ENCODE measurements at regions of chr5 and their contacts with region 1.

Region 1: DNA sequence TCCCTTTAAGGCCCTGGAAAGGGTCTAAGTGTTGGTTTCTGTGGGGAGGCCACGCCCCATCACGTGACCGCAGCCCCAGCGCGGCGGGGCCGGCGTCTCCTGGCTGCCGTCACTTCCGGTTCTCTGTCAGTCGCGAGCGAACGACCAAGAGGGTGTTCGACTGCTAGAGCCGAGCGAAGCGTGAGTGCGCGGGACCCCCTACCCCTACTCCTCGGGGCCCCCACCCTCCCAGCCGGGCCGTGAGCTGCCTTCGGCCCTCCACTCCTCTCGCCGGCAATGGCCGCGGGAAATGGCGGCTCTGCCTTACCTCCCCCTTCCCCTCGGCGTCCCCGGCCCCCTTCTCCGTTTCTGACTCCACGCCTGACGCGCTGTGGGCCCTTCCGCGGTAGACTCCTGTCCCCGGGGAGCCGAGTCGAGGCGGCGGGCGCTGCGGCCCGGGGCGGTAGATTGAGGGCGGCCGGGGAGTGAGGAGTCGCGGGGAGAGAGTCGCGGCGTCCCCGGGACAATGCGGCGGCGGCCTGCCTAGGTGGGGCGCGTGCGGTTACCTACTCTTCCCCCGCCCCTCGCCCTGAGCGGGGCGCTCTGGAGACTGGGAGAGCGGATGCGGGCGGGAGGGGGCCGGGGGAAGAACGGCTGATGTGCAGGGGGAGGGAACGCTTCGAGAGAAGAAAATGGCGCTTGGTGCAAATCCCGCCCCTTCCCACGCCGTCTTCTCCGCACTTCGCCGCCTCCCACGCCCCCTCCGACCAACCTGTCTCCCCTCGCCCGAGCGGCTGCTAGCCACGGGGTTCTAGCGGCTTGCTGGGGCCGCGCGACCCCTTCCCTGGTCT is at the start of gene SUB1:
- DNase-seq: peak; percentile 94 to 96 (median 96)
- H3K4me3 ChIP-seq: peak within 1 kb of the TSS; percentile 74 to 97 (median 89)
- H3K27ac ChIP-seq: peak within 1 kb of the TSS; percentile 98 to 99
- H3K4me1 ChIP-seq: peaks cover 13 to 38% (median 20%) of the 10 kb centered on the region in 4 experiments
- H3K27me3 ChIP-seq: no peaks in the 10 kb centered on the region

Region 2: DNA sequence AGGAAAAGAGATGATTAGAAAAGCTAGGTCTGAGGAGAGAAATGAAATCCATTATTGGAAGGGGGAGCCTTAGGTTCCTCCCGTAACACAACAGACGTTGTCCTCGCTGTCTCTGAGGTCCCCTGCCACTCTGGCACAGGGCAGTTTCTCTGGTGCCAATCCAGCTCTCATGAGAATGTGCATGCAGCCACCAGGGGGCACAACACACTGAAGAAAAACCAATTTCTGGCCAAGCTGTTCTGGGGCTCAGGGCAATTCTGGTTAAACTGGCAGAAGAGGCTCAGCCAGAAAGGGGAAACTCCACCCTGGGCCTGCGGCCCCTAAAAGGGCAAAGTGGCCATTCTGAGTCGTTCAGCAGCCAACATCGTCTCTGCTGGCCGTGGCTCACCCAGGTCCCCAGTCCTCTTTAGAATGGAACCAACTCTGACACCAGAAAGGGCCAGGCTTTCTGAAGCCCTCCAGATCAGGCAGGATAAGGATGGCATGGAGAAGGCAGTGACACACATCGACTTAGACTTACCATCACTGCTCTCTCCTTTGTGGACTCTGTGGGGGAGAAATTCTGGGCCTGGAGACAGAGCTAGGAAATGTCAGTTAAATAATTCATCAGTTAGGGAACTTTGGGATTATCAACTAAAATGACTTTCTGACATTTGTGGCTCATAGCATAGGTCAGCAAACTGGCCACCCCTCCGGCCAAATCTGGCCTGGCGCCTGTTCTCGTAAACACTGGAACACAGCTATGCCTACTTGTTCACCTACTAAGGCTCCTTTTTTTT is 353.0 kb before region 1 on chr5:
- CTCF ChIA-PET with region 1: interaction called, 11 read pairs
- POLR2A ChIA-PET with region 1: no interaction called
- DNase-seq: peak; percentile 87 to 95 (median 93)
- H3K4me3 ChIP-seq: peak overlapping the region in 1 of 7 experiments; percentile 13
- H3K27ac ChIP-seq: peak overlapping the region in 1 of 2 experiments; percentile 31
- H3K4me1 ChIP-seq: peaks cover 6 to 50% (median 36%) of the 10 kb centered on the region in 4 experiments
- H3K27me3 ChIP-seq: no peaks in the 10 kb centered on the region

Region 3: DNA sequence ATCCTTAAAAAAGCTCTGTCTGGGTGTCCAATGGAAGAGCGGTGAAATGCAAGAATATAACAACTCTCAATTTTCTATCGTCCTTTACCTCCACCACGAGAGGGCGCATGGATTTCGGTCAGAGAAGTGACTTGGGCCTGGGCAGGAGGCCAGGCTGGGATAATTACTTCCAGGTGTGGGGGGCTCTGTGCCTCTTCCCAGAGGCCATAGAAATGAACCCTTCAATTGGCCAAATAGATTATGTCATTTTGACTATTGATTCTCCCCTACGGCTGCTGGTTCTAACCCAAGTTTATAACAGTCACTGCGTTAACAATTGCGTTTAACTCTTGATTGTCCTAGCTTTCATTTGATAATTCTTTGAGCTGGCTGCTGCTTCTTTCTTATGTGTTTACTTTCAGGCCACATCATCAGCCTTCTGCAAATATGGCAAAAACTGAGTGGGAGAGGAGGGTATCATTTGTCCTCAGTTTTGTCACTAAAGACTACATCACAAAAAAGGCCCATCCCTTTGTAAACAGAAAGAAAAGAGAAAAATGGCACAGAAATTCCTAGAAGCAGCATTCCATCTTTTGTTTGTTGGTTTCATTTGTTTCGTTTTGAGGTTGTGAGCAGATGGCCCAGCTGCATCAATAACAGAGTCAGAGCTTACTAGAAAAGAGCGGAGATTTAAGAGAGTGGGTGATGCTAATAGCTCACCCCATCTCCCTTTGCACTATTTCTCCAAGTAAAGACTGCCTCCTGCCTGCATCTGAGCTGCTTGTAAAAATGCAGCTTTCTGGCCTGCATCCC is 95.7 kb before region 1 on chr5:
- CTCF ChIA-PET with region 1: interaction called, 152 read pairs
- POLR2A ChIA-PET with region 1: interaction called, 4 read pairs
- DNase-seq: peak; percentile 68 to 81 (median 74)
- H3K4me3 ChIP-seq: no peak overlapping the region
- H3K27ac ChIP-seq: no peak overlapping the region
- H3K4me1 ChIP-seq: no peaks in the 10 kb centered on the region
- H3K27me3 ChIP-seq: no peaks in the 10 kb centered on the region

Region 4: GRCh38 chr5:32498484-32498883 is 87.2 kb before region 1 on chr5:
- CTCF ChIA-PET with region 1: interaction called, 23 read pairs
- POLR2A ChIA-PET with region 1: no interaction called
- DNase-seq: no peak
- H3K4me3 ChIP-seq: no peak overlapping the region
- H3K27ac ChIP-seq: no peak overlapping the region
- H3K4me1 ChIP-seq: peaks cover 0 to 18% (median 5%) of the 10 kb centered on the region in 4 experiments
- H3K27me3 ChIP-seq: no peaks in the 10 kb centered on the region

Region 5: DNA sequence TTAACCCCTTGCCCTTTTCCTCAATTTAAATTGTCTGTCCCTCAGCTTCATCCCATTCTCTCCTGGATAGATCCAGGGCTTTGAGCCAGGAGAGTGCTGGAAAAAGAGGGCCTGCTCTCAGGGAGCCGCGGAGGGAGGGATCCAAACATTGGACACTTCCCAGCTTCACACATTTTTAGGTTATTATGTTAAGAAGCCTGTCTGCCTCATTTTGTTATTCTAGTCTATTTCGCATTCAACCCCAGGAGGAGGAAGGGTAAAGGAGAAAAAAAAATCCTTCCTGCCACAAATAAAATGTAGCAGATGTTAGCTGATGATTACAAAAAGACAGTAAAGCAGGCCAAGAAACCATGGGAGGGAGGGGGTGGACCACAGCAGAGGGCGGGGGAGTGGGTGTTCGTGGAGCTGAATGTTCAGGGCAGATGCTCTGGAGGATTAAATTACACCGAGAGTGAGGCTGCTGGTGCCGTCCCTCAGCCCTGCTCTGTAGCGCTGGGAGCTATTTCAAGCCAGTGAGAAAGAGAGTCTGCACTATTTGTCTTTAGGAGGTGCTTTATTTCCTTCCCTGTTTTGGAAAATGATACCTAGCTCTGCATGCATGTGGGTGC is 80.6 kb before region 1 on chr5:
- CTCF ChIA-PET with region 1: interaction called, 23 read pairs
- POLR2A ChIA-PET with region 1: interaction called, 8 read pairs
- DNase-seq: peak; percentile 91 to 98 (median 97)
- H3K4me3 ChIP-seq: peak overlapping the region in 6 of 7 experiments; percentile 34 to 71 (median 50)
- H3K27ac ChIP-seq: peak overlapping the region; percentile 43 to 75
- H3K4me1 ChIP-seq: peaks cover 22 to 32% (median 31%) of the 10 kb centered on the region in 4 experiments
- H3K27me3 ChIP-seq: no peaks in the 10 kb centered on the region

Region 6: GRCh38 chr5:32511776-32512374 is 73.8 kb before region 1 on chr5:
- CTCF ChIA-PET with region 1: interaction called, 14 read pairs
- POLR2A ChIA-PET with region 1: interaction called, 3 read pairs
- DNase-seq: no peak
- H3K4me3 ChIP-seq: no peak overlapping the region
- H3K27ac ChIP-seq: no peak overlapping the region
- H3K4me1 ChIP-seq: peaks cover 0 to 1% (median 0%) of the 10 kb centered on the region in 4 experiments
- H3K27me3 ChIP-seq: no peaks in the 10 kb centered on the region

Region 7: DNA sequence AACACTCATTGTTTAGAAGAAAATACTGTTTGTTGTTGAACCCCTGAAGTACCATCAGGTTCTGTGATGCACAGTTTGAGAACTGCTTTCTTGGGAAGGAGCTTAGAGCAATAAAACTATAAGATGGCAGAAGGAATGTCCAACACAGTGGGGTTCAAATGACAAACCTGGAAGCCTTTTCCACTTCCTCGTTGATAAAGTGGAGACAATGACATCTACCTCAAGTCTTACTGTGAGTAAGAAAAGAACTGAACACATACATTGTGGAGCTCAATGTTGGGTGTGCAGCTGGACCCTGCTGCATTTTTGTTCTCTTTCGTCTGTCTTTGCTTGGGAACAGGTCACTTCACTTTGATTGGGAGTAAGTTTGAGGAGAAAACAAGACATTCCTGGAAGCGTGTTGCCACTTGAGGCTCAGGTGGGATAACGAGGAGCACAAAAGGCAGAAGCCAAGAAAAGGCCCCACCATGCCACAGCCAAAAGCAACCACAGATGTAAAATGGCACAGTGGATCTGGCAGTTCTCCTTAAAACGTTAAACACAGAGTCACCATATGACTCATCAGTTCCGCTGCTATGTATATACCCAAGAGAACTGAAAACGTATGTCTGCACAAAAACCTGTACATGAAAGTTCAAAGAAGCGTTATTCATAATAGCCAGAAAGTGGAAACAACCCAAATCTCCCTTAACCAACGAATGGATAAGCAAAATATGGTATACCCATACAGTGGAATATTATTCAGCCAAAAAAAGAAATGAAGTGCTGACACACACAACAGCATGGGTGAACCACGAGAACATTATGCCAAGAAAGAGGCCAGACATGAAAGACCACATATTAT is 43.2 kb before region 1 on chr5:
- CTCF ChIA-PET with region 1: no interaction called
- POLR2A ChIA-PET with region 1: no interaction called
- DNase-seq: peak in 1 of 3 donors; percentile 45
- H3K4me3 ChIP-seq: no peak overlapping the region
- H3K27ac ChIP-seq: no peak overlapping the region
- H3K4me1 ChIP-seq: peaks cover 0 to 17% (median 5%) of the 10 kb centered on the region in 4 experiments
- H3K27me3 ChIP-seq: no peaks in the 10 kb centered on the region

Region 8: GRCh38 chr5:32598260-32598937 is 12.7 kb after region 1 on chr5:
- CTCF ChIA-PET with region 1: interaction called, 11 read pairs
- POLR2A ChIA-PET with region 1: no interaction called
- DNase-seq: peak in 1 of 3 donors; percentile 60
- H3K4me3 ChIP-seq: no peak overlapping the region
- H3K27ac ChIP-seq: no peak overlapping the region
- H3K4me1 ChIP-seq: peaks cover 0 to 12% (median 6%) of the 10 kb centered on the region in 4 experiments
- H3K27me3 ChIP-seq: no peaks in the 10 kb centered on the region